ENCODE measurements at regions of chr1 and their contacts with region 1.

Region 1: DNA sequence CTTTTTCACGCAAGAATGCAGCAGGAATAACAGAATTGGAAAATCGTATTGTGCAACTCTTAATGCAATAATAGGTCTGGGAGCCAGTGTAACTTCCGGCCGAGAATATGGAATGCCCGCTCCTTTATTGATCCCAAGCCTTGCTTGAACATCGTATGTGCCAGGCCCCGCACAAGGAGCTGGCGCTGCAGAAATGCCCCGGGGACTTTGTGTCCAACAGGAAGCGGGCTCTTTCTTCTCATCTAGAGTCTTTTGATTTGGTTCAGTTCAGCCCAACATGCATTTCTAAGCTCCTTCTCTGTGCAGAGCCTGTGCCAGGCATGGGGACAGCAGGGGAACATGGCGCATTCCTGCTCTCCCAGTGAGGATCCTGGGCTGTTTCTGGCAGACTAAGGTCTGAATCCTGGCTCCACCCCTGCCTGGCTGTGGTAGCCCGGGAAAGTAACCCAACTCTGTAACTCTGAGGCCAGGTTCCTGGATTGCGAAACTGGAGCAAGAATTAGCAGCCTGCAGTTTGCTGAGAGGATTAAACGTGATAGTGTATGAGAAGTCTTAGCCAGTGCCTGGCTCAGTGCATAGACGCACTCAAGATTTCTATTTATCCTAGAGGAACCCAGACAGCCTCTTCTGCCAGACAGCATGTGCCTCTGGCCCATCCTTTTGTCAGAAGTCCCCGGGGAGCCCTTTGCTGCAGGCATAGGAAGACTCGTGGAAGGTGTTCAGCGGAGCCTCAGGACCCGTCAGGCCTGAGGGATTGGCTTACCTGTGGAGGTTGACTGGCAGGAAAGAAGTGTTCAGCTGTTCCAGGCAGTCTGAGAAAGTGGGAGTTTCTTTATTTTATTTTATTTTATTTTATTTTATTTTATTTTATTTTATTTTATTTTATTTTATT is 994 bp upstream of the CDCP2 start:
- DNase-seq: no peak
- ATAC-seq: peak; percentile 29
- H3K4me3 ChIP-seq: no peak overlapping the region
- H3K27ac ChIP-seq: no peak overlapping the region
- H3K4me1 ChIP-seq: peaks cover 0 to 7% of the 10 kb centered on the region in 2 experiments; a peak in 1 of 5 replicates
- H3K27me3 ChIP-seq: peaks cover 0 to 5% of the 10 kb centered on the region in 2 experiments; a peak in 1 of 5 replicates
- CTCF ChIP-seq: no peak
- EP300 ChIP-seq: no peak
- POLR2A ChIP-seq: no peak
- RAD21 ChIP-seq: no peak

Region 2: DNA sequence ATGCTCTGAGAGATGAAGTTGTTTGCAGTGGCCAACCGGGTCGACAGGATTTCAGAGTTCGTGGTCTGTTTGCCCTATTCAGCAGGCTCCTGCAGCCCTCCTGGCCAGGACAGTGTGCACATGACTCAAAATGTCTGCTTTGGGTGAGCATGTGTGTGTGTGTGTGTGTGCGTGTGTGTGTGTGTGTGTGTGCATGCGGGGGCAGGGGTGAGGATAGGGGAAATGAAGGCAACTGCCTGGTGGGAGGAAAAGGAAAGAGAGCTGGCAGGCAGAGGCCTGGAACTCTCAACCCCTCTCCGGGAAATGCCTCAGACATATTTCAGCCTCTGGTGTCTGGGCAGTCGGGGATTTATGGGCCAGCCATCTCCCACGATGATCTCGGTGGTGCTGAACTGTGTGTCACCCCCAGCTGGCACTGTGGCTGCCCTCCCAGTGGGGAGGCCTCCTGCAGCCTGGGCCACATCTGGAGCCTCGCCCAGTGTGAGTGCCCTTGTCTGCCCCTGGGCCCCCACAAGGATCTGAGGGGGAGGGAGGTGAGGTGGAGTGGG is 16.2 kb before region 1 on chr1:
- CTCF ChIA-PET with region 1: no interaction called
- POLR2A ChIA-PET with region 1: interaction called, 11 read pairs
- in situ Hi-C with region 1: no loop called
- intact Hi-C with region 1: no loop called
- DNase-seq: no peak
- ATAC-seq: 0 out of 3 replicates have a peak, but pooled peaks have one; percentile 11
- H3K4me3 ChIP-seq: no peak overlapping the region
- H3K27ac ChIP-seq: no peak overlapping the region
- H3K4me1 ChIP-seq: peaks cover 3 to 16% of the 10 kb centered on the region in 2 experiments; a peak in 4 of 5 replicates
- H3K27me3 ChIP-seq: peaks cover 10 to 19% of the 10 kb centered on the region in 2 experiments; a peak in 3 of 5 replicates
- CTCF ChIP-seq: no peak
- EP300 ChIP-seq: no peak
- POLR2A ChIP-seq: no peak
- RAD21 ChIP-seq: no peak

Region 3: GRCh38 chr1:54227091-54227602 is 73.4 kb after region 1 on chr1:
- CTCF ChIA-PET with region 1: no interaction called
- POLR2A ChIA-PET with region 1: no interaction called
- in situ Hi-C with region 1: no loop called
- intact Hi-C with region 1: no loop called
- DNase-seq: no peak
- ATAC-seq: no peak
- H3K4me3 ChIP-seq: no peak overlapping the region
- H3K27ac ChIP-seq: no peak overlapping the region
- H3K4me1 ChIP-seq: peaks cover 27 to 41% of the 10 kb centered on the region in 2 experiments
- H3K27me3 ChIP-seq: no peaks in the 10 kb centered on the region
- CTCF ChIP-seq: no peak
- EP300 ChIP-seq: no peak
- POLR2A ChIP-seq: no peak
- RAD21 ChIP-seq: no peak

Measured in K562 (cell line).